ENCODE measurements at regions of chr14 and their contacts with region 1.

Region 1: GRCh38 chr14:95495538-95496025 is 20.9 kb downstream of the SYNE3 start:
- DNase-seq: no peak
- H3K4me3 Mint-ChIP-seq: peak overlapping the region; percentile 60
- H3K27ac Mint-ChIP-seq: peak overlapping the region; percentile 94
- H3K4me1 Mint-ChIP-seq: peaks cover 62% of the 10 kb centered on the region
- H3K27me3 Mint-ChIP-seq: no peaks in the 10 kb centered on the region

Region 2: GRCh38 chr14:95442633-95443021 is 53.0 kb before region 1 on chr14:
- intact Hi-C with region 1: loop called (anchors 1 kb)
- DNase-seq: peak; percentile 56
- H3K4me3 Mint-ChIP-seq: no peak overlapping the region
- H3K27ac Mint-ChIP-seq: peak overlapping the region; percentile 57
- H3K4me1 Mint-ChIP-seq: peaks cover 5% of the 10 kb centered on the region
- H3K27me3 Mint-ChIP-seq: no peaks in the 10 kb centered on the region

Region 3: DNA sequence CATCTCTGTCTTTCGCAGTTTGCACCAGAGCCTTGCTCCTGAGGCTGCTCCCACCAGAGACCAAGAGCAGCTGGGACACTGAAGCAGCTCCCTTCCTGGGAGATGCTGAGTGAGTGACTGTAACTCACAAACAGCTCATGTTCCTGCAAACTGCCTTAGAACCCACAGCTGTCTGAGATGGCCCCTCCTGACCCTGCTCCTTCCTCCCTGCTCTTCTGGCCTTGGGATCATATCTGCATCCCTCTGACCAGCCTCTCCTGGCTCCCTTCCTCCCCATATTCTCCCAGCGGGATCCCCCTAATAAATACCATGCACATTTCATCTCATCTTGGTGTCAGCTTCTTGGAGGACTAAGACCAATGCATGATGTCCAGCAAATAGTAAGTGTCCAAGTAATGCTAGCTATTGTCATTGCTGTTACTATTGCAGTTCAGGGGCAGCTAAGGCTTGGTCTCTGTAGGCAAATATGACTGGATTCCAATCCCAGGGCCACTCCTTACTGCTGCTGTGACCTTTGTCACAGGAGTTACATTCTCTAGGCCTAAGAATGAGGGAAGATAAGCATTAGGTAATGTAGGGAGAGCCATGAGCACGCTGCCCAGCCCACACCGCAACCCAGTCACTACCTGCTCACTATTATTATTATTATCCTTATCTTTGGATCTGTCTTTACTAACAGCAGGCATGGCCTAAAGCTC is 27.0 kb before region 1 on chr14:
- intact Hi-C with region 1: no loop called
- DNase-seq: no peak
- H3K4me3 Mint-ChIP-seq: no peak overlapping the region
- H3K27ac Mint-ChIP-seq: peak overlapping the region; percentile 54
- H3K4me1 Mint-ChIP-seq: peaks cover 38% of the 10 kb centered on the region
- H3K27me3 Mint-ChIP-seq: no peaks in the 10 kb centered on the region

Region 4: GRCh38 chr14:95480109-95480886 is 15.3 kb before region 1 on chr14:
- intact Hi-C with region 1: loop called (anchors 1 kb)
- DNase-seq: peak; percentile 39
- H3K4me3 Mint-ChIP-seq: peak overlapping the region; percentile 27
- H3K27ac Mint-ChIP-seq: peak overlapping the region; percentile 96
- H3K4me1 Mint-ChIP-seq: peaks cover 33% of the 10 kb centered on the region
- H3K27me3 Mint-ChIP-seq: no peaks in the 10 kb centered on the region

Region 5: GRCh38 chr14:95507701-95508103 is 12.1 kb after region 1 on chr14:
- intact Hi-C with region 1: loop called (anchors 1 kb)
- DNase-seq: no peak
- H3K4me3 Mint-ChIP-seq: peak overlapping the region; percentile 30
- H3K27ac Mint-ChIP-seq: peak overlapping the region; percentile 72
- H3K4me1 Mint-ChIP-seq: peaks cover 84% of the 10 kb centered on the region
- H3K27me3 Mint-ChIP-seq: no peaks in the 10 kb centered on the region